ENCODE measurements at regions of chr1 and their contacts with region 1.

Region 1: GRCh38 chr1:178282949-178283367 is 189.1 kb downstream of the RASAL2 start:
- DNase-seq: no peak
- H3K4me3 Mint-ChIP-seq: no peak overlapping the region
- H3K27ac Mint-ChIP-seq: no peak overlapping the region
- H3K4me1 Mint-ChIP-seq: peaks cover 39% of the 10 kb centered on the region
- H3K27me3 Mint-ChIP-seq: no peaks in the 10 kb centered on the region
- CTCF ChIP-seq: no peak

Region 2: DNA sequence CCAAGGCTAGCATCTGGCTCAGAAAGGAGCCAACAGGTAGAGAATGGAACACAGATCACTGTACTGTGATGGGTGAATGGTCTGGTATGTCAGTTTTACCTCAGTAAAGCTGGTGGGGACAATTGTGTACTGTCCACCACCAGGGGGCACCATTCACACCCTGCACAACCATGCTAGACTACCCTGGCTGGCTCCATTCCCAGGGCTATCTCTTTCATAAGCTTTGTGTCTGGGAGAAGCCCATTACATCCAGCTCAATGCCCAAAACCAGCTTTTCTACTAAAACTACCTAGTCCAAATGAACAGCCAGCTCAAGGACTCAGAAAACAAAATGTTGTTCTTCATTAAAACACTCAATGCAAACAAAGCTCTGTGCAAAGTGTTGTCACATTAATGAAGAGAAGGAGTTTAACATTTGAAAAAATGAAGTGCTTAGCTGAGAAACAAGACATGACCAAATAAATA is 251.1 kb before region 1 on chr1:
- CTCF ChIA-PET with region 1: interaction called, 12 read pairs
- intact Hi-C with region 1: loop called (anchors 1 kb)
- DNase-seq: peak; percentile 92
- H3K4me3 Mint-ChIP-seq: no peak overlapping the region
- H3K27ac Mint-ChIP-seq: no peak overlapping the region
- H3K4me1 Mint-ChIP-seq: peaks cover 15% of the 10 kb centered on the region
- H3K27me3 Mint-ChIP-seq: no peaks in the 10 kb centered on the region
- CTCF ChIP-seq: peak; percentile 85

Region 3: GRCh38 chr1:178055779-178056471 is 227.0 kb before region 1 on chr1:
- CTCF ChIA-PET with region 1: no interaction called
- intact Hi-C with region 1: loop called (anchors 2 kb)
- DNase-seq: peak; percentile 39
- H3K4me3 Mint-ChIP-seq: no peak overlapping the region
- H3K27ac Mint-ChIP-seq: no peak overlapping the region
- H3K4me1 Mint-ChIP-seq: peaks cover 61% of the 10 kb centered on the region
- H3K27me3 Mint-ChIP-seq: no peaks in the 10 kb centered on the region
- CTCF ChIP-seq: no peak

Region 4: GRCh38 chr1:178238722-178239510 is 44.0 kb before region 1 on chr1:
- CTCF ChIA-PET with region 1: no interaction called
- intact Hi-C with region 1: loop called (anchors 2 kb)
- DNase-seq: peak; percentile 41
- H3K4me3 Mint-ChIP-seq: peak overlapping the region; percentile 29
- H3K27ac Mint-ChIP-seq: peak overlapping the region; percentile 65
- H3K4me1 Mint-ChIP-seq: peaks cover 46% of the 10 kb centered on the region
- H3K27me3 Mint-ChIP-seq: no peaks in the 10 kb centered on the region
- CTCF ChIP-seq: no peak